Activated T-helper 1 cell treated with anti-CD3 and anti-CD28 coated beads, Interleukin-12 subunit alpha, Interleukin-12 subunit beta, Interleukin-2, Interleukin-4 antibody, amounts not matched to agents 30 ng/mL and 10 ng/mL and 1 ng/mL, durations not matched to agents 14 hours and 24 hours and 36 hours (primary cell): ENCODE measurements at regions of chr1 and their contacts with region 1.

Region 1: DNA sequence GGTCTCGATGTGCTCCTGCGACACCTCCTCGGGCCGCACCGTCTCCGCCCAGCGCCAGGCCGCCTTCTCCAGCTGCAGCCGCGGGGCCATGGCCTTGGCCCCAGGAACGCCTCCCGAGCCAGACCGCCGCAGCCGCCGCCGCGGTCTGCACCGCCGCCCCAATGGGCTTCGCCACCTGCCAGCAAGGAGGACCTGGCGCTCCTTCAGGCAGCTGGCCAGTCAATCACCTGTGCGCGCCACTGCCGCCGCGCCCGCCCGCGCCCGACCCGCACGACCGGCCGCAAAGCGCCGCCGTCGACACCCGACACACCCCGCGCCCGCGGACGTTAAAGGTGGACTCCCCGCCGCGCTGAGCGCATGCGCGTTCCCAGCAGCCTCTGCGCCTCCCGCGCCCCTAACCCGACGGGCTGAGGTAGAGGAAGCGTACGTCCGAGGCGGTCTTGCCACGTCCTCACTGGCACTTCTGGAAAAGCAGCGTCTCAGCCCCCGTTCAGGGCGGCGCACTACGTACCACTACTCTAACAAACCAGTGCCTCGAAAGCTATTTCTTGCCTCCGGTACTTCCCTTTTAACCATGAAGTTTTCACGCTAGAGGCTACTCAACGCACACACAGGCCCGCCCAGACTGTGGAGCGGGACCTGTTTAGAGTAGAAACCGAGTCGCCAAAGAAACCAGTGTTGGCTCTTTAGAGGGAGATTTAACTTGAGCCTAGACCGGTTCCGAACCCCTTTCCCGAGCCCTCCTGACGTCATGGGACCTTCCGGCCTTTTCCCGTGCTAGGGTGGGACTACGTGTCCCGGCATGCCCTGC is at the start of gene USP48:
- DNase-seq: peak; percentile 98
- H3K4me3 Mint-ChIP-seq: peak within 1 kb of the TSS; percentile 91
- H3K27ac Mint-ChIP-seq: peak within 1 kb of the TSS; percentile 100
- H3K4me1 Mint-ChIP-seq: peaks cover 26% of the 10 kb centered on the region
- H3K27me3 Mint-ChIP-seq: peaks cover 3% of the 10 kb centered on the region
- total RNA-seq, gene USP48: 88.7 and 97.1 TPM in 2 replicates

Region 2: DNA sequence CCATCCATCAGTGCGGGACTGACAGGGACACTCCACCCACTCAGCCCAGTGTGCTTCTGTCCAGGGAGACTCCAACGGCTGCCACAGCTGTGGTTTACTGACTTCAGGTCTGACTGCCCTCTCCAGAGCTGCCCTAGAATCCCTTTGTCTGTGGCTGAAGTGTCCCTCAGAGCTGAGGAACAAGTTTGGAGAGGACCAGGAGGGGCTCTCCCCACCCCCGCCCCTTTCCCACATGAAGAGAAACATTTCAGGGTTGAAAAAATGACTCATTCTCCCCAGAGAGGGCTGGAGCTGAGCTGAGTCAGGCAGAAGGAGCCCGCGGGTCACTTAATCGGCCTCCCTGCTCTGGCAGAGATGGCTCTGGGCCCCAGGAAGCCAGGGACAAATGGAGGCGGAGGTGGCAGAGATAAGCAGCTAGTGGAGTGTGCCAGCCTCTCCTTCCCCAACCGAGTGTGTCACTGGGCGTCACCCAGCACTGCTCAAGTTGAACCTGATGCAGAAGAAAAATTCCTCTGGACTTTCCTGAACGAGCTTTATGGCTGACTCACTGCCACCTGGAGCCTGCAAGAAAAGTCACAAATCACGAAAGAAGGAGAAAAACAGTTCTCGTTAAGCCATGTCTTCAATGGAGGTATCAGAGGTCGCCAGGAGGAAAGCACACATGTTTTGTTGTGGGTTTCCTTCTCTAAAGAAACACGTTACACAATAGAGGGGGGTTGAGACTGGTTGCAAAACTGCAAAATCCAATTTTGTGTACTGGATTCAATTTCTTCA is 458.5 kb before region 1 on chr1:
- intact Hi-C with region 1: loop called (anchors 10 kb)
- DNase-seq: peak; percentile 40
- H3K4me3 Mint-ChIP-seq: peak overlapping the region; percentile 71
- H3K27ac Mint-ChIP-seq: peak overlapping the region; percentile 95
- H3K4me1 Mint-ChIP-seq: peaks cover 68% of the 10 kb centered on the region
- H3K27me3 Mint-ChIP-seq: peaks cover 2% of the 10 kb centered on the region

Region 3: DNA sequence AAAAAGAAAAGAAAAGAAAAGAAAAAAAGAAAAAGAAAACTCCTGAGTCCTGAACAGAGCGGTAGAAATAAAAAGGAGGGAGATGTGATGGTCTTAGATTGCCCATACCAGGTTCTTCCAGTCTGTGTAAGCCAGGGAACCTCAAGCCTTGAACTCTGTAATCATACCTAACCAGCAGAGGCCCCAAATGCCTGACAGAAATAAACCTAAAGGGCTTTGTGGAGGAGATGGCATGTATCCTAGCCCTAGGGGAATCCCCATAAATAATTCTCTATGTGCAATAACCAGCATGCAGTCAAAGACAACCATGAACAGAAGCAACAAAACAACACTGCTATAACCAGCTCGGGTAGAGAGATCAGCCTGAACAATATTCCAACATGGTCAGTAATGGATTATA is 40.5 kb before region 1 on chr1:
- intact Hi-C with region 1: loop called (anchors 2 kb)
- DNase-seq: no peak
- H3K4me3 Mint-ChIP-seq: no peak overlapping the region
- H3K27ac Mint-ChIP-seq: no peak overlapping the region
- H3K4me1 Mint-ChIP-seq: peaks cover 25% of the 10 kb centered on the region
- H3K27me3 Mint-ChIP-seq: no peaks in the 10 kb centered on the region

Region 4: GRCh38 chr1:21956720-21957552 is 173.9 kb after region 1 on chr1:
- intact Hi-C with region 1: loop called (anchors 5 kb)
- DNase-seq: peak; percentile 9
- H3K4me3 Mint-ChIP-seq: peak overlapping the region; percentile 4
- H3K27ac Mint-ChIP-seq: peak overlapping the region; percentile 26
- H3K4me1 Mint-ChIP-seq: peaks cover 25% of the 10 kb centered on the region
- H3K27me3 Mint-ChIP-seq: peaks cover 2% of the 10 kb centered on the region

Region 5: DNA sequence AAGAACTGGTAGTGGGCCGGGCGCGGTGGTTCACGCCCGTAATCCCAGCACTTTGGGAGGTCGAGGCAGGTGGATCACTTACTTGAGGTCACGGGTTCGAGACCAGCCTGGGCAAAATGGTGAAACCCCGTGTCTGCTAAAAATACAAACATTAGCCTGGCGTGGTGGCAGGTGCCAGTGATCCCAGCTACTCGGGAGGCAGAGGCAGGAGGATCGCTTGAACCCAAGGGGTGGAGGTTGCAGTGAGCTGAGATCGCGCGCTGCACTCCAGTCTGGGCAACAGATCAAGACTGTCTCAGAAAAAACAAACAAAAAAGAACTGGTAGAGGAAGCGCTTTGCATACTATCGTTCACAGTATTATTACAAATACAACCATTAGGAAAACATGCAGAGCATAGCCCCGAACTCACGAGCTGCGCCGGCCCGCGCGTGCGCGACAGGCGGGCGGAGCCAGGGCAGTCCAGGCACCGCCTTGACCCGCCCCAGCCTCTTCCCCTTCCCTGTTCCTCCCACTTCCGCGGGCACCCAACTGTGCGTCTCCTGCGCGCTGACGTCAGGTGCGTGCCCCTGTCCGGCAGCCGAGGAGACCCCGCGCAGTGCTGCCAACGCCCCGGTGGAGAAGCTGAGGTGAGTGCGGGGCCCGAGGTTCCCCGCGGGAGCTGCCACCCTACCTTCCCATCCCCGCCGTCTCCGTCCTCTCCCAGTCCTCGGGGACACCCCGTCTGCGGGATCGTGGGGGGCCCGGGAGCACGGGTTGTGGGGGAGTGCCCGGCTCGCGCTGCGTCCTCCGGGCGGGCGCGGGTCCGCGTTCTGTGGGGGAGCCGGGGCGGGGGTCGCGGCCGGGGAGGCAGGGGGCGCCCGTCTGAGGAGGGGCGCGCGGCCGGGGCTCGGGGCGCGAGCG is 269.3 kb after region 1 on chr1 and contains the start of gene CDC42:
- intact Hi-C with region 1: loop called (anchors 1 kb)
- DNase-seq: peak; percentile 96
- H3K4me3 Mint-ChIP-seq: peak within 1 kb of the TSS; percentile 99
- H3K27ac Mint-ChIP-seq: peak within 1 kb of the TSS; percentile 99
- H3K4me1 Mint-ChIP-seq: peaks cover 60% of the 10 kb centered on the region
- H3K27me3 Mint-ChIP-seq: peaks cover 2% of the 10 kb centered on the region
- total RNA-seq, gene CDC42: 293 and 318 TPM in 2 replicates